Heart right ventricle (tissue), 16 donors: ENCODE measurements at regions of chr3 and their contacts with region 1.

Region 1: GRCh38 chr3:111859974-111860859 is 1.2 kb downstream of the PHLDB2 start:
- DNase-seq: peak; percentile 68 to 88
- ATAC-seq: peak; percentile 68 to 86 (median 80)
- H3K4me3 ChIP-seq: peak overlapping the region; percentile 75 to 90 (median 86)
- H3K27ac ChIP-seq: peak overlapping the region; percentile 93 to 100 (median 98)
- H3K4me1 ChIP-seq: peaks cover 2 to 59% (median 37%) of the 10 kb centered on the region in 9 donors
- H3K27me3 ChIP-seq: peaks cover 0 to 25% (median 0%) of the 10 kb centered on the region in 7 donors
- CTCF ChIP-seq: peak; percentile 40 to 75 (median 61)

Region 2: GRCh38 chr3:111604119-111604518 is 256.1 kb before region 1 on chr3:
- intact Hi-C with region 1: no loop called
- DNase-seq: no peak
- ATAC-seq: no peak
- H3K4me3 ChIP-seq: no peak overlapping the region
- H3K27ac ChIP-seq: no peak overlapping the region
- H3K4me1 ChIP-seq: no peaks in the 10 kb centered on the region
- H3K27me3 ChIP-seq: peaks cover 0 to 27% (median 0%) of the 10 kb centered on the region in 7 donors
- CTCF ChIP-seq: no peak

Region 3: DNA sequence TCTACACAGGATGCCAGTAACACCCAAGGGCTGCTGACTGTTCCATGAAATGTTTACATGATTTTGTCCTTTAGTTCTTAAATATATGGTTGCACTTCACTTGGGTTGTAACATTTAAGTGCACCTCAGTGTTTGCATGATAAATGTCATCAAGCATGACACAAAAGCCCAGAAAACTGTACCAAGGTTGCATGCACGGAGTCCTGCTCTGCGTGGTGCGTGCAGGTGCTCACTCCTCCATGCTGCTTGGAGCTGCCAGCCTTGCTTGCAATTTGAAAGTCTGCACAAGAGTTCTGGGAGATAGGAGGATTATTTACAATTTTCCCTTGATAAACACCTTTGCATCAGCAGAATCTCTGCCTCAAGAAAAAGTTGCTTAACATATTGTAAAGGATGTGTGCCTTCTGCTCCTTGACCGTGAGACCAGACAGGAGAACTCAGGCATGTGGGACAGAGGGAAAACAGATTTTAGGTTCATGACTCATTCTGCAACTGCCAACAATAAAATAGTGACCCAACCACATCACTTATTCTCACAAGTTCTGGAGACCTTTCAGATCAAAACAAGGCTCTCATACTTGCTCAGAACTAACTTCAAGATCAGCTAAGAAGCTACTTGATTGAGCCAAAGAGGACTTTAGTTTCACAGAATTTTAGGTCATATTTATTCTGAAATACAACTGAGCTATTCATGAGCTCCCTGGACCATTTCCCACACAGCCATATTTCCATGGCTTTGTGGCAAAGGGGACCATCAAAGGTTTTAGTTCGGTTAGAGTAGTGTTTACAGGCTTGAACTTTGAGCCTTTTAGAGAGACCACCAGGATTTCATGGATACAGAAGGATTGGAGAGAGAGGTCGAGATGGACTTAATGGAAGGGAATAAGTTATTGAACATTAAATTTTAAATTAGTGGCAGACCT is 136.7 kb before region 1 on chr3:
- intact Hi-C with region 1: loop called in 5 of 10 experiments (anchors 2 to 5 kb)
- DNase-seq: no peak
- ATAC-seq: peak in 5 of 8 donors; percentile 30 to 63 (median 37)
- H3K4me3 ChIP-seq: no peak overlapping the region
- H3K27ac ChIP-seq: peak overlapping the region in 3 of 10 donors; percentile 2 to 46 (median 34)
- H3K4me1 ChIP-seq: peaks cover 0 to 33% (median 13%) of the 10 kb centered on the region in 9 donors
- H3K27me3 ChIP-seq: no peaks in the 10 kb centered on the region
- CTCF ChIP-seq: no peak

Region 4: GRCh38 chr3:111737706-111738086 is 122.5 kb before region 1 on chr3:
- intact Hi-C with region 1: loop called in 7 of 10 experiments (anchors 1 to 5 kb)
- DNase-seq: peak in 1 of 2 donors; percentile 79
- ATAC-seq: peak; percentile 69 to 85 (median 82)
- H3K4me3 ChIP-seq: no peak overlapping the region
- H3K27ac ChIP-seq: peak overlapping the region; percentile 39 to 93 (median 82)
- H3K4me1 ChIP-seq: peaks cover 0 to 66% (median 55%) of the 10 kb centered on the region in 9 donors
- H3K27me3 ChIP-seq: no peaks in the 10 kb centered on the region
- CTCF ChIP-seq: no peak

Region 5: DNA sequence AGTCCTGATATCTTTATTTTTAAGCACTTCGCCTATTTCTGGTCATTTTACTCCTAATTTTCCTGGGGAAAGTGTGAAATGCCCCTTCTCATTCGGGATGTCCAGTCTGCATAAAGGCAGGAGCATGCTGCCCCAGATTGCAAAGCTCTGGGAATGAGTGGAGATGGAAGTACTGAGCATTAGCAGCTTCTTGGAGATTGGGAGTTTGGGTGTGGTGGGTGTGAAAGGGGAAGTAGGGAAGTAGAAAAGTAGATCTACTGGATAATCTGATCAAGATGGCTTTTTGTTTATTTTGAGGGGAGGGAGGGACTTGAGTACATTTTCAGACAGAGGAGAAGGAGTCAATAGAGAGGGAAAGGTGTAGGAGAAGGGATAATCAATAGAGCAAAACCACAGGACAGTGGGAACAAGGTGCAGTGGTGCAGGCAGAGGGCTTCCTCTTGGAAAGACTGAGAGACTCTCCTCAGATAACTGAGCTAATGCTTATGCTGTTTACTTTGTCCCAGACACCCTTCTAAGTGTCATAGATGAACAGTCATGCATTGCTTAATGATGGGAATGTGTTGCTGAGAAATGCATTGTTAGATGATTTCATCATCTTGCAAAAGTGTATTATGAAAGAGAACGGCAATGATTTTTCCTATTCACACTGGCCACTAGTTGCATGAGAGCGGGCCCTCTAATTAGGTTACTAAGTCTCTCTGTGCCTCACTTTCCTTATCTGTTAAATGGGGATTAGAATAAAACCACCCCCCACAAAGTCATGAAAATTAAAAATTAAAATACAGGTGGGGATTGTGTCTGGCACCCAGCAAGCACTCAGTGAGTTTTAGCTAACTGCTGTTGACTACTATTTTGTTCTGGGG is 44.4 kb after region 1 on chr3:
- intact Hi-C with region 1: loop called in 1 of 10 experiments (anchors 5 kb)
- DNase-seq: no peak
- ATAC-seq: peak in 7 of 8 donors; percentile 52 to 95 (median 66)
- H3K4me3 ChIP-seq: no peak overlapping the region
- H3K27ac ChIP-seq: peak overlapping the region in 6 of 10 donors; percentile 13 to 65 (median 47)
- H3K4me1 ChIP-seq: peaks cover 3 to 76% (median 51%) of the 10 kb centered on the region in 9 donors
- H3K27me3 ChIP-seq: no peaks in the 10 kb centered on the region
- CTCF ChIP-seq: no peak

Region 6: GRCh38 chr3:111917300-111917699 is 57.1 kb after region 1 on chr3:
- intact Hi-C with region 1: loop called in 6 of 10 experiments (anchors 5 to 10 kb)
- DNase-seq: no peak
- ATAC-seq: peak in 5 of 8 donors; percentile 50 to 79 (median 70)
- H3K4me3 ChIP-seq: no peak overlapping the region
- H3K27ac ChIP-seq: peak overlapping the region in 6 of 10 donors; percentile 5 to 74 (median 44)
- H3K4me1 ChIP-seq: peaks cover 0 to 63% (median 45%) of the 10 kb centered on the region in 9 donors
- H3K27me3 ChIP-seq: no peaks in the 10 kb centered on the region
- CTCF ChIP-seq: no peak

Region 7: GRCh38 chr3:111967651-111968274 is 107.5 kb after region 1 on chr3:
- intact Hi-C with region 1: loop called (anchors 2 to 10 kb)
- DNase-seq: peak; percentile 68 to 85
- ATAC-seq: peak; percentile 74 to 88 (median 82)
- H3K4me3 ChIP-seq: peak overlapping the region in 1 of 10 donors; percentile 10
- H3K27ac ChIP-seq: peak overlapping the region in 9 of 10 donors; percentile 28 to 81 (median 56)
- H3K4me1 ChIP-seq: peaks cover 0 to 62% (median 30%) of the 10 kb centered on the region in 9 donors
- H3K27me3 ChIP-seq: no peaks in the 10 kb centered on the region
- CTCF ChIP-seq: peak; percentile 85 to 94 (median 89)